Activated T-helper 2 cell treated with anti-CD3 and anti-CD28 coated beads, Interferon-gamma antibody, Interleukin-2, Interleukin-4, amounts not matched to agents 10 μg/mL and 5 μg/mL and 100 μg/mL, durations not matched to agents 14 hours and 24 hours and 36 hours (primary cell): ENCODE measurements at regions of chr6 and their contacts with region 1.

Region 1: DNA sequence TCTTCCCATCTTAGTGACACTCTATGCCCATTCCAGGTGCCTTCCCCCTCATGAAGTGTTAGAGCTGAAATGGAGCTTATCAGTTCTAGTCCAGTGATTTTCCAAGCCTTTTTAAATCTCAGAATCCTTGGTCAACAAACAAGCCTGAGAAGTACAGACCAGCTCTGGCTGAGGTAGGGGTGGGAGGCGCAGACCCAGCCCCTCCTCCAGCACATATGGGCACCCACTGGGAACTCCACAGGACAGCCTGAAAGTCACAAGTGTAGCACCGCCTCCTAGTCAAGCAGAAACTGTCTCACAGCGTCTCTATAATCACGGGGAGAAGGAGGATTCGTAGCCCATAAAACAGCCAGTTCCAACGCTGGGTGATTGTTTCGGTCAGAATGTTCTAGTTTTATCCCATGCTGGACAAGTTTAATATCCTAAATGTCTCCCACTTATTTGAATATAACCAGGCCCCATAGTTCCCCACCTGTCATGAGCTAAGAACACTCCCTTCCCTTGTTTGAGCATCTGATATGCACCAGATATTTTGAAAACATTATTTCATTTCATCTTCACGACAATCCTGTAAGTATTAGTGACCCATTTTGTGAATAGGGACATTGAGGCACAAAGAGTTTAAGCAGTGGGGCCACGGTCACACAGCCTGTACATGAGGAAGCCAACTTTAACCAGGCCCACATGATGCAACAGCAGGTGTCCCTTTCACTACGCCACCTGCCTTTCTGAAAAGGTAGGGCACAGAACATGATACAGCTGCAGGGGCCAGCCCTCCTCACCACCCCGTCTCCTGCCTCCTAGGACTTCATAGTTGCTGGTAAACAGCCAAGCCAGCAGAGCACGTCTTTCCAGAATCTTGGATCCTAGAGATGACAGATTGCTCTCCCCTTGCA is 40.1 kb downstream of the TRAF3IP2 start:
- DNase-seq: no peak
- H3K4me3 Mint-ChIP-seq: no peak overlapping the region
- H3K27ac Mint-ChIP-seq: peak overlapping the region; percentile 53
- H3K4me1 Mint-ChIP-seq: peaks cover 70% of the 10 kb centered on the region
- H3K27me3 Mint-ChIP-seq: no peaks in the 10 kb centered on the region

Region 2: GRCh38 chr6:111533087-111533784 is 32.3 kb before region 1 on chr6:
- intact Hi-C with region 1: loop called (anchors 1 kb)
- DNase-seq: peak; percentile 43
- H3K4me3 Mint-ChIP-seq: peak overlapping the region; percentile 30
- H3K27ac Mint-ChIP-seq: peak overlapping the region; percentile 50
- H3K4me1 Mint-ChIP-seq: peaks cover 35% of the 10 kb centered on the region
- H3K27me3 Mint-ChIP-seq: no peaks in the 10 kb centered on the region

Region 3: DNA sequence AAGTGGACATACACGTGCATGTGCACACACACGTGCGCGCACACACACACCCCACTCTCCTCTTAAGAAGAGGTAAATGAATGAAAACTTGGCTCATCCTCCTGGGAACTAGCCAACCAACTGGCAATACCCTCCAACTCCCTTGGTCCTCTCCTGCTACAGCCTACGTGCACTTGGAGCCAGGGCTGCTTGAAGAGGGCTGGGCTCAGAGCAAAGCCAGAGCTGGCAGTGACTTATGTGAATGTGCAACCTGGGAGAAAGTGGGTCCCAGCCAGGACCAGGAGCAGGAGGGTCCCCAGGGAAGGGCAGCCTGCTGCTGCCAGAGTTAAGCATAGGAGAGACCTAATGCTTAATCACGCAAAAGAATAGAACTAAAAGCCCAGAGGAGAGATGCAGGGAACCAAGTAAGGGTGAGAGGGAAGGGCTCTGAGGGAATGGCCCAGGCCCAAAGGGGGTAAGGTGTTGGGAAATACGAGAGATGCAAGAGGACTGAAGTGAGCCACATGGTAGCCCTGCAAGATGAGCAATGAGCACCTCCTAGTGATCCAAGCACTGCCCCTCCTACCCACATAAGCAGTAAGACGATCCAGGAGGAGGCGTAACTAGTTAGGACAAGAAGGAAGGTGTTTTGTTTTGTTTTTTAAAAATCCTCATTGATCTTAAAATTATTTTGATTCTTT is 15.4 kb after region 1 on chr6:
- intact Hi-C with region 1: loop called (anchors 2 kb)
- DNase-seq: no peak
- H3K4me3 Mint-ChIP-seq: no peak overlapping the region
- H3K27ac Mint-ChIP-seq: no peak overlapping the region
- H3K4me1 Mint-ChIP-seq: peaks cover 23% of the 10 kb centered on the region
- H3K27me3 Mint-ChIP-seq: no peaks in the 10 kb centered on the region

Region 4: DNA sequence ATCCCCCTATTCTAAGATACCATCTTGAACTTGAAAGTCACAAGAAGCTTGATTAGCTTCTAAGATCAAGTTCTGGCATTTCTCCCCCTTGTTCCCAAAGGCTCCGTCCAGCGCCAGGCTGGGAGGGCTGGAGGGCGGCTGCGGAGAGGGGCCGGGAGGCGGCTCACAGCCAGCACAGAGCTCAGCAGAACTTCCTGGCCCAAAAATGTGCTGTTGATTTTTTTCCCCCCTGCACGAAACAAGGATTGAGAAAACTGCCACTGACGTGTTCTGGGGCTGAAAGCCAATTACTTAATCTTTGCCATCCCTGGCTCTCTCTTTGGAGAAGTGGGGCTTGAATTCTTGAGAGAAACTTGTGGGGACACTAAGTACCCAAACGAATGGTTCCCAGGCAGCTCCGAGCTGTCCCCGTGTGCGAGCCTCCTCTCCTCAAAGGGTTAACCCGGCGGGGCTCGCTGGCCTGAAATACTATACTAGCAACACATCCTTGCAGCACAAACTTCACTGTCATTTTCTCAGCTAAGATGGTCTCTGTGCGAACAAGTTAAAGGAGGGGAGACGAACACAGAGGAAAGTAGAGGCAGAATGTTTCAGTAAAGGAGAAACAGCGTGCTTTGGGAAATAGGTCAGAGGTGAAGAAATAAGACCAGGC is 39.7 kb after region 1 on chr6:
- intact Hi-C with region 1: loop called (anchors 1 kb)
- DNase-seq: peak; percentile 15
- H3K4me3 Mint-ChIP-seq: peak overlapping the region; percentile 90
- H3K27ac Mint-ChIP-seq: peak overlapping the region; percentile 98
- H3K4me1 Mint-ChIP-seq: peaks cover 49% of the 10 kb centered on the region
- H3K27me3 Mint-ChIP-seq: no peaks in the 10 kb centered on the region